H1 (cell line): ENCODE measurements at regions of chr1 and their contacts with region 1.

Region 1: GRCh38 chr1:24695202-24695974 is 49.9 kb upstream of the CLIC4 start:
- DNase-seq: no peak
- H3K4me3 ChIP-seq: no peak overlapping the region
- H3K27ac ChIP-seq: no peak overlapping the region
- H3K4me1 ChIP-seq: peaks cover 0 to 6% (median 3%) of the 10 kb centered on the region in 4 experiments; a peak in 4 of 7 replicates
- H3K27me3 ChIP-seq: no peaks in the 10 kb centered on the region
- CTCF ChIP-seq: no peak
- EP300 ChIP-seq: no peak
- POLR2A ChIP-seq: no peak
- RAD21 ChIP-seq: no peak

Region 2: GRCh38 chr1:24759492-24759891 is 64.1 kb after region 1 on chr1:
- CTCF ChIA-PET with region 1: no interaction called
- POLR2A ChIA-PET with region 1: no interaction called
- DNase-seq: peak in 1 of 2 experiments; percentile 24
- H3K4me3 ChIP-seq: no peak overlapping the region
- H3K27ac ChIP-seq: no peak overlapping the region
- H3K4me1 ChIP-seq: peaks cover 0 to 7% (median 3%) of the 10 kb centered on the region in 4 experiments; a peak in 3 of 7 replicates
- H3K27me3 ChIP-seq: no peaks in the 10 kb centered on the region
- CTCF ChIP-seq: no peak
- EP300 ChIP-seq: no peak
- POLR2A ChIP-seq: no peak
- RAD21 ChIP-seq: no peak

Region 3: GRCh38 chr1:24769656-24770651 is 74.6 kb after region 1 on chr1:
- CTCF ChIA-PET with region 1: no interaction called
- POLR2A ChIA-PET with region 1: no interaction called
- DNase-seq: peak in 1 of 2 experiments; percentile 26
- H3K4me3 ChIP-seq: no peak overlapping the region
- H3K27ac ChIP-seq: no peak overlapping the region
- H3K4me1 ChIP-seq: peaks cover 0 to 4% (median 0%) of the 10 kb centered on the region in 4 experiments; a peak in 3 of 7 replicates
- H3K27me3 ChIP-seq: no peaks in the 10 kb centered on the region
- CTCF ChIP-seq: no peak
- EP300 ChIP-seq: no peak
- POLR2A ChIP-seq: no peak
- RAD21 ChIP-seq: no peak

Region 4: DNA sequence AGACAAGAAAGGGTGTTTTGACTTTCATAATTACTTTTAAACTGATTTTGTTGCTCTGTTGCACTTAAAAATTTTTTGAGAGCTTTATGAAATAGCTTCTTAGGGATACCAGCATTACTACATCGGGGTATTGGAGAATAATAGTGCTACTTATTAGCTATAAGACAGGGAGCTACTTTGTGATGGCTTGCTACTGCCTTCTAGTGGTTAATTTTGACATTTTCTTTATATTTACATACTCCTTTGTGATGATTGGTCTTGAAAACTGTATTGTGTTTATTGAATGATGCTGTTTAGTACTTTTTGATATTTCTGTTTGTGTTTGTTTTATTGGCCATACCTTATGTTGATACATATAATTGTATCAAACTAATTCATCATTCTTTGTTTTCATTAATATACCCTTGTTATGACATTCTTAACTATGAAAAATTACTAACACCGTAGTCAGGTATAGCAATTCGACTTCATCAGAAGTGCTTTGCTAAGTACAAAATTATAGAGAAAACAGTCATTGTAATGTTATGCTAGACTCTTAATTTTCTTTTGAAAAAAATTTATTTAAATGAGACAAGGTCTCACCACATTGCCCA is 135.4 kb after region 1 on chr1:
- CTCF ChIA-PET with region 1: interaction called, 247 read pairs
- POLR2A ChIA-PET with region 1: no interaction called
- DNase-seq: no peak
- H3K4me3 ChIP-seq: no peak overlapping the region
- H3K27ac ChIP-seq: no peak overlapping the region
- H3K4me1 ChIP-seq: no peaks in the 10 kb centered on the region; a peak in 1 of 7 replicates
- H3K27me3 ChIP-seq: no peaks in the 10 kb centered on the region
- CTCF ChIP-seq: peak in 2 of 3 experiments; percentile 43 to 59; a peak in 2 of 4 replicates
- EP300 ChIP-seq: no peak
- POLR2A ChIP-seq: no peak
- RAD21 ChIP-seq: peak; percentile 74 to 84